Right ventricle myocardium superior (tissue), 1 donor: ENCODE measurements at regions of chr3 and their contacts with region 1.

Region 1: GRCh38 chr3:172410702-172411477 is 37.4 kb downstream of the GHSR start:
- DNase-seq: no peak
- ATAC-seq: no peak

Region 2: DNA sequence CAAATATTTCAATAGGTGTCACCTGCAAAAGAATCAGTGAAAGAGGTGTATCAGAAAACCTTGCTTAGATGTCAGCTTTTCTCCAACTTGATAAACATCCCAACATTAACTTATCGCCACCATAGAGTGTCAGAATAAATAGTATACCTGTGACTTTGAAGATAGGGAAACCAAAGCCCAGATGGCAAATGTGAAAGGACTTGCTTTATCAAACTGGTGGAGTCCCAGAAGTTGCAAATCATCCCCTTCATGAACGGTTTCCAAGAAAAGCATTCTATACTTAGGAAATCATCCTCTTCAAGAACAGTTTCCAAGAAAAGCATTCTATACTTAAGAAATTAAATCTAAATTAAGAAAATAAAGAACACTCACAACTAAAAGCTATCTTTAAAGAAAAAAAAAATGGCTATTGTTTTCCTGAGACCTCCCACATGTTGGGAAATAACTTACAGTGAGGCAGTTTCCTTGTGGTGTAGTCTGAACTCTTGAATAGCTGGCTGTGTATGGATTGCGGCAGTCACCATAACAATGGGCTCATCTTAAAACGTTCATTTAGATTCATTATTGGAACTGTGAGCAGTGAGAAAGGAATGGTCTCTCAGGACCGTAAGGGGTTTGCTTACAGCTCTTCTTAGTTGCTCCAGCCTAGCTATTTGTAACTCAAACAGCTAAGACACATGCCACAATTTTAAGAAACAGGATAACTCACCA is 19.1 kb before region 1 on chr3:
- intact Hi-C with region 1: no loop called
- DNase-seq: no peak
- ATAC-seq: no peak

Region 3: DNA sequence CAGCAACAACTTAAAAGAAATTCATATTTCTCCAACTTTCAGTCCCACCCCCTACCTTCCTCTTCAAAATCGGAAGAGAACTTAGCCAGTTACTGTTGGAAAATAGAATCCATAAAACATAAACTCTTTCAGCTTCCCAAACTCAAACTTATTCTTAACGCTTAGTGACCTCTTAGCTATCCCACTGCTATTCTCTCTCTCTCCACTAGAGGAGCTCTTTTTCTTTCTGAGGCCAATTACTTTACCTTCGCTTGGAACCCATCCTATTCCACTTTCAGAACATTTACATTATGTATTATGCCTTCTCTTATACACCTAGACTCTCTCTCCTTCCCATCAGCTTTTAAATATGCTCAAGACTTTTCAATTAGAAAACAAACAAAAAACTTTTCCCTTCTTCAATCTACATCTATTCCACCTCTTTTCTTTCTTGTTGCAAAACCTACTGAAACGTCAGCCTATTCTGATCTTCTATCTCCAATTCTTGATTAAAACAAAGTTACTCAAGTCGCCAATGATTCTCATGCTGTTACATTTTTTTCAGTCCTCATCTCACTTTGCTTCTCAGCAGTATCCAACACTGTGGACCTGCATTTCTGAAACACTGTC is 50.7 kb after region 1 on chr3:
- intact Hi-C with region 1: loop called (anchors 5 kb)
- DNase-seq: no peak
- ATAC-seq: no peak

Region 4: GRCh38 chr3:172607305-172608121 is 196.6 kb after region 1 on chr3:
- intact Hi-C with region 1: no loop called
- DNase-seq: no peak
- ATAC-seq: peak; percentile 25